Caco-2 (cell line): ENCODE measurements at regions of chr1 and their contacts with region 1.

Region 1: GRCh38 chr1:81305997-81306452 is 494.7 kb upstream of the ADGRL2 start:
- DNase-seq: peak in 1 of 2 experiments; percentile 4
- H3K4me3 ChIP-seq: peak overlapping the region; percentile 28
- H3K4me3 Mint-ChIP-seq: no peak overlapping the region
- H3K27ac Mint-ChIP-seq: no peak overlapping the region
- H3K4me1 ChIP-seq: no peaks in the 10 kb centered on the region
- H3K4me1 Mint-ChIP-seq: no peaks in the 10 kb centered on the region
- H3K27me3 ChIP-seq: no peaks in the 10 kb centered on the region
- H3K27me3 Mint-ChIP-seq: no peaks in the 10 kb centered on the region
- CTCF ChIP-seq: peak in 1 of 2 experiments; percentile 23

Region 2: DNA sequence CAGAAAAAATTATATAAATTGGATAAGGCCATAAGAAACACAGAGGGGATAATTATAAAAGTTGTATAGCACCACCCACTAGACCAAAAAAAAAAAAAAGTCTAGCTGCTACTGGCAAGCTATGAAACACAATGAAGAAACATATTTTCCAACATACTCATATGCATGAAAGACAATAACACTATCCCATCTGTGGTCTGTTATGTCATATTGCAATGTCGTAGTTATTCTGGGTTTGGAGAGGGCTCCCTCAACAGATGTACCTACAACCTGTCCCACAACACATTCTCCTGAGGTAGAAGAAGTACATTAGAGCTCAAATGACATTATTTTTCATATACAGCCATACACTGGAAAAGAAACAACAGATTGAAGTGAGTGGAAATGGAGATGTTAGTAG is 1781.9 kb before region 1 on chr1:
- CTCF ChIA-PET with region 1: no interaction called
- POLR2A ChIA-PET with region 1: no interaction called
- intact Hi-C with region 1: no loop called
- DNase-seq: no peak
- H3K4me3 ChIP-seq: no peak overlapping the region
- H3K4me3 Mint-ChIP-seq: no peak overlapping the region
- H3K27ac Mint-ChIP-seq: no peak overlapping the region
- H3K4me1 ChIP-seq: 0 out of 2 replicates have a peak, but pooled peaks cover under 1% of the 10 kb centered on the region
- H3K4me1 Mint-ChIP-seq: no peaks in the 10 kb centered on the region
- H3K27me3 ChIP-seq: no peaks in the 10 kb centered on the region
- H3K27me3 Mint-ChIP-seq: no peaks in the 10 kb centered on the region
- CTCF ChIP-seq: no peak

Region 3: GRCh38 chr1:80961464-80962190 is 344.4 kb before region 1 on chr1:
- CTCF ChIA-PET with region 1: no interaction called
- POLR2A ChIA-PET with region 1: no interaction called
- intact Hi-C with region 1: no loop called
- DNase-seq: no peak
- H3K4me3 ChIP-seq: no peak overlapping the region
- H3K4me3 Mint-ChIP-seq: no peak overlapping the region
- H3K27ac Mint-ChIP-seq: no peak overlapping the region
- H3K4me1 ChIP-seq: no peaks in the 10 kb centered on the region
- H3K4me1 Mint-ChIP-seq: no peaks in the 10 kb centered on the region
- H3K27me3 ChIP-seq: no peaks in the 10 kb centered on the region
- H3K27me3 Mint-ChIP-seq: no peaks in the 10 kb centered on the region
- CTCF ChIP-seq: no peak

Region 4: DNA sequence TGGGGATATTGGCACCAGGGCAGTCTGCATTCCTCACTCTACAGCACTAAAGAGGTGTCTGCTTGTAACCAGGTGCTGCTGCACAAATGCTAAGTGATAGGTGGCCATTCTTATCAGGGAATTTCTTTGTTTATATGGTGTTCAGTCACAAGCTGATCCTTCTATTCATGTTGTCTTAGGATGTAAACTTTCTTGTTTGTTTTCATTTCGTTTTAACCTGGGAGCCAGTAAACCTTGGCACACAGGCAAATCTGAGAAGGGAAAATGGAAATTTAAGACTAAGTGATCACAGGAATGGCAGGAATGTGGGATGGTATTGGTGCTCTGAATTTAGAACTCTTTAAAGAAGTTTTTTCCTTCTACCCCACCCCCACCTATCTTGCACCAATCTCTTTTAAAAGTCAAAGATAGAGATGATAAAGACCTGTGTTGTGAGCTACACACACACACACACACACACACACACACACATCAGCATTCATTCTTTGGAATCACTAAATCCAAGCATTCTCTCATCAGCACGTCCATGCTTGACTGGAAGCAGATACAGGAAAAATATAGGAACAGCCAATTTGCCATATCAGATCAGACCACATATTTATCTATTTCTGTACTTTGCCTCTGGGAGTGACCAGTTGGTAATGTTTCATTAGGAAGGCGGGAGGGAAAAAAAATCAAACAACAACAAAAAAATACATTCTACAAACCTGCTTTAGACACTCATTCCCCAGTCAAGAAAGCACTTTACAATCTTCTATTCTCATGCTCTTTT is 43.4 kb after region 1 on chr1:
- CTCF ChIA-PET with region 1: no interaction called
- POLR2A ChIA-PET with region 1: no interaction called
- intact Hi-C with region 1: loop called (anchors 2 kb)
- DNase-seq: peak in 1 of 2 experiments; percentile 5
- H3K4me3 ChIP-seq: no peak overlapping the region
- H3K4me3 Mint-ChIP-seq: peak overlapping the region; percentile 39
- H3K27ac Mint-ChIP-seq: peak overlapping the region; percentile 51
- H3K4me1 ChIP-seq: no peaks in the 10 kb centered on the region
- H3K4me1 Mint-ChIP-seq: no peaks in the 10 kb centered on the region
- H3K27me3 ChIP-seq: no peaks in the 10 kb centered on the region
- H3K27me3 Mint-ChIP-seq: peaks cover 3% of the 10 kb centered on the region
- CTCF ChIP-seq: no peak

Region 5: DNA sequence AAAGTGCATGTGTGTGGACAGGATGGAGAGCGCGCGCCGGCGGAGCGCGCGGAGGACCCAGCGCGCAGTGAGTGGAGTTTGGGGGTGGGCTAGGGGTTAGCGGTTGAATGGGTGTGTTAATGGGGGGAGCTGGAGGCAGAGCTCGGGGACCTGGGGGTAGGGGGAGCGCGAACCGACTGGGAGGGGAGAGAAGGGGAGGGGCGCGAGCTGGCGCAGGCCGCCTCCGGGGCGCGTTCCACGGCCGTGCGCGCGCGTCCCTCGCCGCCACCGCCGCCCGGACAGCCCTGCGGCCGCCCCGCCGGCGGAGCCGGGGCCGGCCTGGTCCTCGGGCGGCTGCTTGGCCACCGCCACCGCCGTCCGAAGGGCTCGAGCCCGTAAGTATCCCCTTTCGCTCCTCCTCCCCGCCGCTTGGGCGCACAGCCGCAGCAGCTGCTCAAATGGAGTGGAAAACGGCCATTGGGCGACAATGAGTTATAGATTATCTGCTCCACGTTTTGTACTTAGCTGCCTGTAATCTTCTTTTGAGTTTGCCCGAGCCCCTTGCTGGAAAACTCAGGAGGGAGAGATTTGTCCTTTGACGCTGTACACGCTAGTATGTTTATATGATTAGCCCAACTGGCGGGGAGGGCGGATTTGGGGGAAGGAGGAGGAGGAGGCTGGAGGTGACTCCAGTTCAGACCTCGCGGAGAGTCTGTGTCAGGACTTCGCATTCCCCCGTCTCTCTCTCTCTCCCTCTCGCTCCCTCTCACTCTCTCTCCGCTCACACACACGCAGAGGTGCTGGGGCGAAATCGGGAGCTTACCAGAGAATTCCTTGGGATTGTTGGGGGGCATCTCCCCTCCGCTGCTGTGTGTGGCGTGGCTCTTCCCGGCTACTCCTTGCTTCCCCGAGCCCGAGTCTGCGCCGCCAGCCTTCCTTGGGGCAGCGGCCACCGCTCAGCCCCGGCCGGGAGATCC is 494.9 kb after region 1 on chr1 and contains the start of gene ADGRL2:
- CTCF ChIA-PET with region 1: interaction called, 3 read pairs
- POLR2A ChIA-PET with region 1: no interaction called
- intact Hi-C with region 1: loop called (anchors 5 kb)
- DNase-seq: peak in 1 of 2 experiments; percentile 44
- H3K4me3 ChIP-seq: peak within 1 kb of the TSS; percentile 32
- H3K4me3 Mint-ChIP-seq: peak within 1 kb of the TSS; percentile 83
- H3K27ac Mint-ChIP-seq: no peak within 1 kb of the TSS
- H3K4me1 ChIP-seq: no peaks in the 10 kb centered on the region; the same call in 1 of the 2 replicates
- H3K4me1 Mint-ChIP-seq: no peaks in the 10 kb centered on the region
- H3K27me3 ChIP-seq: no peaks in the 10 kb centered on the region; the same call in 1 of the 2 replicates
- H3K27me3 Mint-ChIP-seq: peaks cover 8% of the 10 kb centered on the region
- CTCF ChIP-seq: no peak
- total RNA-seq, gene ADGRL2: 3.8 and 4.6 TPM in 2 replicates